SK-N-SH (cell line): ENCODE measurements at regions of chr1 and their contacts with region 1.

Region 1: GRCh38 chr1:116164604-116165368 is 53.6 kb downstream of the MAB21L3 start:
- DNase-seq: peak; percentile 55
- H3K4me3 ChIP-seq: no peak overlapping the region
- H3K27ac ChIP-seq: peak overlapping the region in 1 of 2 experiments; percentile 69; a peak in 2 of 4 replicates
- H3K4me1 ChIP-seq: peaks cover 0 to 26% of the 10 kb centered on the region in 2 experiments; a peak in 1 of 4 replicates
- H3K27me3 ChIP-seq: no peaks in the 10 kb centered on the region
- CTCF ChIP-seq: no peak
- EP300 ChIP-seq: no peak
- RAD21 ChIP-seq: no peak

Region 2: GRCh38 chr1:115946116-115946515 is 218.7 kb before region 1 on chr1:
- CTCF ChIA-PET with region 1: no interaction called
- POLR2A ChIA-PET with region 1: no interaction called
- DNase-seq: no peak
- H3K4me3 ChIP-seq: no peak overlapping the region
- H3K27ac ChIP-seq: no peak overlapping the region
- H3K4me1 ChIP-seq: no peaks in the 10 kb centered on the region
- H3K27me3 ChIP-seq: no peaks in the 10 kb centered on the region
- CTCF ChIP-seq: no peak
- EP300 ChIP-seq: no peak
- RAD21 ChIP-seq: no peak

Region 3: DNA sequence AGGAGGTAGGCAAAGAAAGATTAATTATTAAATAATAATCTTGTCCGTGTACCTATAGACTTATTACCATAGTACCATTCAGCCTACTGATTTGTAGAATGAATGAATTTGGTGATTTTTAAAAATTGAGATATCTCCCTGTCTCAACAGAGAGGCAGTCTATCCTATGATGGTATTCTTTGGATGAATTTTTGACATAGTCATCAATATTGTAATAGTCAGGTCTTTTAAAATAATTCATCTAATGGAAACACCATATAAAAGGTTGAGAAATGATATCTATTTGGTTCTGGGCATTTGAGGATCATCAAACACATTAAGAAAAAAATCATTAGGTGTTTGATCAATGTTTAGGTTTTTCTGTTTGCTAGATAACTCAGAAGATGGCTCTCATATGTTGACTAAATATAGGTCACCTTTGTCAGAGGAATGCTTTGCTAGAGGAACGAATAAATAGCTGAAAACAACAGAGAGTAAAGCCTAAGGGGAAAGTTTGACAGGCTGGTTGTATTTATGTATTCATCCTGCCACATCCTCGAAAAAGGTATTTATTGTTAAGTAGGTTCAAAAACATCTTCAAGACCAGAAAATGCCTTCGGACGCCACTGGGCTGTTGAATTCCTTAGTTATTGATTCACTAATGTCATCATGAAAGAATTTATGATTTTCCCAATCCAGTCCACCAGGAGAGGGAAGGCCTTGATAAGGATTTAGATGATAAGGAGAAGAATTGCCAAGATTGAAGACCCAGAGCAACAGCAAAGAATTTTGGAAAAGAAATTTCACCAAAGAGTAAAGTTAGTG is 89.0 kb before region 1 on chr1:
- CTCF ChIA-PET with region 1: no interaction called
- POLR2A ChIA-PET with region 1: no interaction called
- DNase-seq: no peak
- H3K4me3 ChIP-seq: no peak overlapping the region
- H3K27ac ChIP-seq: no peak overlapping the region
- H3K4me1 ChIP-seq: no peaks in the 10 kb centered on the region; a peak in 1 of 4 replicates
- H3K27me3 ChIP-seq: no peaks in the 10 kb centered on the region
- CTCF ChIP-seq: no peak
- EP300 ChIP-seq: no peak
- RAD21 ChIP-seq: no peak

Region 4: GRCh38 chr1:116092752-116093482 is 71.9 kb before region 1 on chr1:
- CTCF ChIA-PET with region 1: no interaction called
- POLR2A ChIA-PET with region 1: no interaction called
- DNase-seq: no peak
- H3K4me3 ChIP-seq: no peak overlapping the region
- H3K27ac ChIP-seq: no peak overlapping the region
- H3K4me1 ChIP-seq: no peaks in the 10 kb centered on the region
- H3K27me3 ChIP-seq: no peaks in the 10 kb centered on the region
- CTCF ChIP-seq: no peak
- EP300 ChIP-seq: no peak
- RAD21 ChIP-seq: no peak

Region 5: DNA sequence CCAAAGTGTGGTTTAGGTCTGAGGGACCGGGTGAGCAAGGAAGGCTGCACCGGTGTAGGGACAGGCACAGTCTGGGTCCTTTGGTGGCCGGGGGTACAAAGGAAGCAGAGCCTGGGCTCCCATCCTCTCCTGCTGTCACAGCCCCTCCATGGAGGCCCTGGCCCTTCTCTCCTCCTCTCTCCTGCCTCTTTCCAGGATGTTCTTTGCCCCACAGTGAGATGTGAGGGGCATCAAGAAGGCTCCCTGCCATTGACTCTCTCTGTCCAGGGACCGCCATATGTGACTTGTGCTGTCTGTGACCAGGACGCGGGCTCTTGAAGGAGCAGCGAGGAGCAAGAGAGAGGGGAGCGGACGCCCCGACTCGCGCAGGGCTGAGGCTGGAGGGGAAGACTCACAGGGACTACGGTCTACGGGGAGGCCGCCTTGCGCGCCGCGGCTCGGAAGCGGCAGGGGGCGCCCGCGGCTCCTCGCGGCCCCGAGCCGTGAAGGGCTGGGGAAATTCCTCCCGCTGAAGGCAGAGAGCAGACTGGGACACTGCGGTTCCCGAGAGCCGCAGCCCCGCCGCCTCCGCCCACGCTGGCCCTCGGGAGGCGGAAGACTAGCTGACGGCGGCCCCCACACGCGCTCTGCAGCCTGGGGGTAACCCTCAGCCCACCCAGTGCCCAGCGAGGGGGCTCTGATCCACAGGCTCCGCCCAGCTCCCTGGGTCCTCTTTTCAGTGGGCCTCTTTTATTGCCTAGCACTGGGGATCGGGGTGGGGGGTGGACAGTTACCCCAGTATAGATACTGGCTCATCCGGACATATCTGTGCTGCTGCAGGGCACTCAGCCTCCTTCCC is 12.8 kb before region 1 on chr1:
- CTCF ChIA-PET with region 1: interaction called, 17 read pairs
- POLR2A ChIA-PET with region 1: interaction called, 3 read pairs
- DNase-seq: peak; percentile 96
- H3K4me3 ChIP-seq: peak overlapping the region; percentile 50 to 51; a peak in 3 of 4 replicates
- H3K27ac ChIP-seq: peak overlapping the region in 1 of 2 experiments; percentile 60; a peak in 1 of 4 replicates
- H3K4me1 ChIP-seq: peaks cover 2 to 4% of the 10 kb centered on the region in 2 experiments; a peak in 2 of 4 replicates
- H3K27me3 ChIP-seq: no peaks in the 10 kb centered on the region
- CTCF ChIP-seq: peak; percentile 75
- EP300 ChIP-seq: no peak
- RAD21 ChIP-seq: peak; percentile 78

Region 6: DNA sequence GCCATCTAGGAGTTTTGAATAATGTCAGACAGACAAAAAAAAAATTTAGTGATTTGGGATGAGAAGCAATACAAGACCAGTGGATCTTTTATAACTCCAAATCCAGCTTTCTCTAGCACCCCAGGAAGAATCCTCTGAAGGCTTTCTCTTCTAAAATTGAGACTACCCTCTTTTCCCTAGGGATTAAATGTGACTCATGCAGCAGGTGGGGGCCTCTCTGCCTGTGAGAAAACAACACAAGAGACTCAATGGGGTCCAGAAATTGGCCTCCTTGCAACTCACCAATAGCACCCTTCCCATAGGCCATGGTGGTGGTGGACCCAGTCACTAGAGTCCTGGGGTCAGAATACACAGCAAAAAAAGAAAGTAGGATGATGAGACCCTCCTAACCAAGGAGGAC is 88.0 kb after region 1 on chr1:
- CTCF ChIA-PET with region 1: no interaction called
- POLR2A ChIA-PET with region 1: no interaction called
- DNase-seq: no peak
- H3K4me3 ChIP-seq: no peak overlapping the region
- H3K27ac ChIP-seq: no peak overlapping the region
- H3K4me1 ChIP-seq: no peaks in the 10 kb centered on the region; a peak in 2 of 4 replicates
- H3K27me3 ChIP-seq: no peaks in the 10 kb centered on the region
- CTCF ChIP-seq: no peak
- EP300 ChIP-seq: no peak
- RAD21 ChIP-seq: no peak